ENCODE measurements at regions of chr12 and their contacts with region 1.

Region 1: DNA sequence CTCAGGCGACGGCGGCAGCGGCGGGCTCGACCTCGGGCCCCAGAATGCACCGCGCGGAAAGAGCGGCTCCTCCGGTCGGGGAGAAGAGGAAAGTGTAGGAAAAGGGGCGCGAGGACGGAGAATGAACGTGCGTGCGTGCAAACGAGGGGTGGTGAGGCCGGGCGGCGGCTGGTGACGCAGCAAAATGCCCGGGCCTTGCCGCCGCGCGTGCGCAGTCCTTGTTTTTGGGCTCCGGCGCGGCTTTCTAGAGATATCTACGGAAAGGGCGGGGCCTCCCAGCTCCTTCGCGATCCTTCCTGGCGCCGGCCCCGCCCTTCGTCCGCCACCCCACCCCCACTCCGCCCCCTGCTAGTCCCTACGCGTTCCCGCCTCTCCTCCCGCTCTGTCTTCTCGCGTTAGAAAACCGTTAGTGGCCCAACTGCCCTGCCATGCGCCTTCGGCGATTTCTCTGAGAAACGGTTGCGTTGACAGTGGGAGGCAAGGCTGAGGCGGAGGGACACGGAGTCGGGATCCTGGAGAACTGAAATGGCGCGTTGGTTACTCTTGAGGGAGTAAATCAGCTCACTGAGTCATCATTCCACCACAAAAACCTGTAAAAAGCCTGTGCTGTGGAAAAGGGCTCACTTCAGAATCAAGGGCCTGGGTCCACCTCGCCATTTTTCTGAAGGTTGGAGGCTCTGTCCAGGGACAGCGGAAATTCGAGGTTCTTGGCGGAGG is at the start of gene PTGES3:
- DNase-seq: peak; percentile 99
- ATAC-seq: peak; percentile 85
- H3K4me3 Mint-ChIP-seq: peak within 1 kb of the TSS; percentile 99
- H3K27ac Mint-ChIP-seq: peak within 1 kb of the TSS; percentile 100
- H3K4me1 Mint-ChIP-seq: peaks cover 11% of the 10 kb centered on the region
- H3K27me3 Mint-ChIP-seq: no peaks in the 10 kb centered on the region
- total RNA-seq, gene PTGES3: 284 to 386 TPM

Region 2: DNA sequence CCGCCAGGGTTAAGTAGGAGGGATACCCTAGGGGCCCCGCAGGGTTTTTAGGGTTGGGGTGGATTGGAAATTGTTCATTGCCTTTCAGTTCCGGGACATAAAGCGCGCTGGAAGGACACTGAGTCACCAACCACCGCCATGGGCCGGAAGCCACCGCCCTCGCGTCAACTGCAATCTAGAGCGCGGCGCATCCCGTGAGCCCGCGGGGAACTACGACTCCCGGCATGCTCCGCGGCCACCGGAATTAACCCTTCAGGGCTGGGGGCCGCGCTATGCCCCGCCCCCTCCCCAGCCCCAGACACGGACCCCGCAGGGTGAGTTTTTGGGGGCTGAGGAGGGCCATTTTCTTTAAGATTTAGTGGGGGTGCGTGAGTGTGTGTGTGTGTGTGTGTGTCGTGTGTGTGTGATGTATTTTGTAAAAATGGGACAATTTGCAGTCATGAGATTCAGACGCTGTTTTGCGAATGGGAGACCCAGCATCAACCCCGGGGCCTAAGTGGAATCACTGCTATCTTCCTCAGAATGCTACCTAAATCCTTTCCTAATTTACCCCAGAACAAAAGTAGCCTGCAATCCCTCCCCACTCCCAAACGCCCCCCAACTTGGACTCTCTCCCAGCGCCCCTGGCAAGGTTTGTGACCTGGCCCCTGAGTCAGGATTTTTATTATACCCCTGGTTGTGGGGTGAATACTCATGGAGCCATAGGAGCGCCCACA is 535.8 kb before region 1 on chr12 and contains the start of gene MYL6B:
- CTCF ChIA-PET with region 1: no interaction called
- POLR2A ChIA-PET with region 1: interaction called, 3 read pairs
- intact Hi-C with region 1: loop called in 1 of 2 experiments (anchors 1 kb)
- DNase-seq: peak; percentile 98
- ATAC-seq: peak; percentile 92
- H3K4me3 Mint-ChIP-seq: peak within 1 kb of the TSS; percentile 88
- H3K27ac Mint-ChIP-seq: peak within 1 kb of the TSS; percentile 99
- H3K4me1 Mint-ChIP-seq: peaks cover 29% of the 10 kb centered on the region
- H3K27me3 Mint-ChIP-seq: no peaks in the 10 kb centered on the region
- total RNA-seq, gene MYL6B: 76.3 to 79.3 TPM

Region 3: GRCh38 chr12:56359851-56360767 is 328.2 kb before region 1 on chr12 and contains the start of gene STAT2:
- CTCF ChIA-PET with region 1: no interaction called
- POLR2A ChIA-PET with region 1: no interaction called
- intact Hi-C with region 1: loop called in 1 of 2 experiments (anchors 1 kb)
- DNase-seq: peak; percentile 99
- ATAC-seq: peak; percentile 97
- H3K4me3 Mint-ChIP-seq: peak within 1 kb of the TSS; percentile 86
- H3K27ac Mint-ChIP-seq: peak within 1 kb of the TSS; percentile 95
- H3K4me1 Mint-ChIP-seq: peaks cover 23% of the 10 kb centered on the region
- H3K27me3 Mint-ChIP-seq: no peaks in the 10 kb centered on the region
- total RNA-seq, gene STAT2: 116 to 124 TPM

Region 4: DNA sequence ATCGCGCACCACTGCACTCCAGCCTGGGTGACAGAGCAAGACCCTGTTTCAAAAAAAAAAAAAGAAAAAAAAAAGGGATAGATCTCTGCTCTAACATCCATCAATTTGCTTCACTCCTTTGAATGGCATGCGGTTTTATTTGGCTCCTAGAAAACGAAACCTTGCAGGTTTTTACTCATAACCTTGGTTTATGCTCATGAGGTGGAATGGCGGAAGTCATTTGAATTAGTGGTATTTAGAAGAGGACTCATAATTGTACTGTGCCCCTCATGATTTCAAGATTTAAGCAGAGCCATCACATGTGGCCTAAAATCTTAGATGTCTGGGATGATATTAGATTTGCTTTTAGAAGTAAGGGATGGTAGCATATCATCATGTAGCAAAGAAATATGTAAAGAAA is 137.2 kb before region 1 on chr12:
- CTCF ChIA-PET with region 1: no interaction called
- POLR2A ChIA-PET with region 1: no interaction called
- intact Hi-C with region 1: no loop called
- DNase-seq: no peak
- ATAC-seq: no peak
- H3K4me3 Mint-ChIP-seq: no peak overlapping the region
- H3K27ac Mint-ChIP-seq: no peak overlapping the region
- H3K4me1 Mint-ChIP-seq: no peaks in the 10 kb centered on the region
- H3K27me3 Mint-ChIP-seq: no peaks in the 10 kb centered on the region

Region 5: GRCh38 chr12:56645717-56646446 is 42.4 kb before region 1 on chr12 and contains the start of gene ATP5F1B:
- CTCF ChIA-PET with region 1: interaction called, 3 read pairs
- POLR2A ChIA-PET with region 1: interaction called, 3 read pairs
- intact Hi-C with region 1: loop called (anchors 1 kb)
- DNase-seq: peak; percentile 95
- ATAC-seq: peak; percentile 99
- H3K4me3 Mint-ChIP-seq: peak within 1 kb of the TSS; percentile 95
- H3K27ac Mint-ChIP-seq: peak within 1 kb of the TSS; percentile 95
- H3K4me1 Mint-ChIP-seq: peaks cover 30% of the 10 kb centered on the region
- H3K27me3 Mint-ChIP-seq: no peaks in the 10 kb centered on the region
- total RNA-seq, gene ATP5F1B: 756 to 818 TPM

Region 6: GRCh38 chr12:56751712-56752598 is 63.7 kb after region 1 on chr12 and contains the start of gene PRIM1:
- CTCF ChIA-PET with region 1: interaction called, 5 read pairs
- POLR2A ChIA-PET with region 1: interaction called, 3 read pairs
- intact Hi-C with region 1: loop called (anchors 1 to 2 kb)
- DNase-seq: peak; percentile 95
- ATAC-seq: peak; percentile 91
- H3K4me3 Mint-ChIP-seq: peak within 1 kb of the TSS; percentile 84
- H3K27ac Mint-ChIP-seq: peak within 1 kb of the TSS; percentile 99
- H3K4me1 Mint-ChIP-seq: peaks cover 32% of the 10 kb centered on the region
- H3K27me3 Mint-ChIP-seq: no peaks in the 10 kb centered on the region
- total RNA-seq, gene PRIM1: 81.3 to 83.7 TPM

Region 7: DNA sequence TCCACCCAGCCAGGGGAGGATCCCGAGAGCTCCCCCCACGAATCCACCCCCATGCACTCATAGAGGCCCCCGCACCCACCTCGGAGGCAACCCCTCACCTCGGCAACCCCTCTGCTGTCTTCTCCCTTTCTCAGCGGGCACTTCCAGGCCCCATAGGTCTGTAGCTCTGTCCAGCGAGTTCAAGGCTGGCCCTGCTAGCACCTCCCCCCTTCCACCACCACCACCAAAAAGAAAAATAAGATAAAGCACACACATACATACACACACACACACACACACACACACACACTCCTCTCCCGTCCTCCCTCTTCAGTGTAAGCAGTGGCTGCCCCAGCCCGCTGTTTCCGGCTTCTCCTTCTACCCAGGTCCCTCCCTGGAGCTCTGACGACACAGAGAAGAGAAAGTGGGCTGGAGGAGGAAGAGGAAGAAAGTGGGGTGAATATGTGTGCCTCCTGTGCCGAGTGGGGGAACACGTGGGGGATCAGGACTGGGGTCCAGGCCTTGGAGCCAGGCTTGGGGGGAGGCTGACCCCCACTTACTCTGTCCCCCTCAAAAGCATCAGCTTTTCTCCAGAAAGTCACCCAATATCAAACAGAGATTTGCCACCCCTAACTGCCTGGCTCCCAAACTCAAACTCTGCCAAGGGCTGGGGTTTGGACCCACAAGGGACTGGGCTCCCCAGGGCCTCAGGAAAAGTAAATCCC is 422.9 kb after region 1 on chr12 and contains the start of gene STAT6:
- CTCF ChIA-PET with region 1: interaction called, 3 read pairs
- POLR2A ChIA-PET with region 1: interaction called, 4 read pairs
- intact Hi-C with region 1: loop called in 1 of 2 experiments (anchors 2 kb)
- DNase-seq: peak; percentile 89
- ATAC-seq: peak; percentile 65
- H3K4me3 Mint-ChIP-seq: peak within 1 kb of the TSS; percentile 98
- H3K27ac Mint-ChIP-seq: peak within 1 kb of the TSS; percentile 97
- H3K4me1 Mint-ChIP-seq: peaks cover 50% of the 10 kb centered on the region
- H3K27me3 Mint-ChIP-seq: no peaks in the 10 kb centered on the region
- total RNA-seq, gene STAT6: 250 to 288 TPM

Region 8: GRCh38 chr12:57151741-57152630 is 463.7 kb after region 1 on chr12:
- CTCF ChIA-PET with region 1: no interaction called
- POLR2A ChIA-PET with region 1: no interaction called
- intact Hi-C with region 1: no loop called
- DNase-seq: no peak
- ATAC-seq: no peak
- H3K4me3 Mint-ChIP-seq: no peak overlapping the region
- H3K27ac Mint-ChIP-seq: no peak overlapping the region
- H3K4me1 Mint-ChIP-seq: no peaks in the 10 kb centered on the region
- H3K27me3 Mint-ChIP-seq: no peaks in the 10 kb centered on the region